ENCODE measurements at regions of chr1 and their contacts with region 1.

Region 1: GRCh38 chr1:34597877-34598514 is 156.9 kb upstream of the GJB5 start:
- DNase-seq: peak; percentile 82
- H3K4me3 ChIP-seq: no peak overlapping the region
- H3K27ac ChIP-seq: no peak overlapping the region
- H3K4me1 ChIP-seq: no peaks in the 10 kb centered on the region
- H3K27me3 ChIP-seq: peaks cover 0 to 41% (median 0%) of the 10 kb centered on the region in 7 donors
- CTCF ChIP-seq: peak; percentile 25 to 71 (median 67)
- POLR2A ChIP-seq: no peak

Region 2: DNA sequence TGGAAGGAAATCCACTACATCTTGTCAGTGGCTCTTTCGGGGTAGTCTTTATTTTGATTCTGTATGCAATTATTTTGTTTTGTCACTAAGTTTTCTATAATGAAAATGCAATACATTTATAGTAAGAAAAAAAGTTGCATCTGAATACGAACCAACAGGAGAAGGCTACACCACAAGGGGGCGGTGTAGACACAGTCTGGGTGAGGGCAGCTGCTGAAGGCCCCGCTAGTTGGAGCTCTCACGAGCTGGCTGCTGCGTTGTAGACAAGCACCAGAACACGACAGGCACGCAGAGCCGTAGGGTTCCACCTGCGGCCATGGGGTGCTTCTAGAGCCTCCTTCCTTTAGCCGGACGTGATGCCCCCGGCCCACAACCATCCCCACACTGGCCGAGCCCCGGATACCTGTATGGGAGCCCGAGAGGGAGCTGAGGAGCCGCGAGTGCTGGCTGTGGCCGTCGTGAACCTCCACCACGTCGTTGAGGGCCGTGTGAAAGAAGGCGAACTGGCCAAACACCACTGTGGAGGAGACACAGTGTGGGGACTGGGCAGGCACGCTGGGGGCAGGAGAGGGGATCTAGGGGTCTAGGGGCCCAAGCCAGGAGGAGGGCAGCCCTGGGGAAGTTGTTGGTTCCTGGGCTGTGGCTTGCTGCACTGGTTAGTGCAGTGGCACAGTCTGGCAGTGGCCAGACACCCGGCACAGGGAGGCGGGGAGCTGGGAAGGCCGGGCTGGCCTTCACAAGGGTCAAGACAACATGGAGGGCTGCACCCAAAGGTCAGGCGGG is 964.8 kb before region 1 on chr1:
- intact Hi-C with region 1: loop called (anchors 10 kb)
- DNase-seq: peak; percentile 92
- H3K4me3 ChIP-seq: no peak overlapping the region
- H3K27ac ChIP-seq: no peak overlapping the region
- H3K4me1 ChIP-seq: peaks cover 0 to 6% (median 5%) of the 10 kb centered on the region in 6 donors
- H3K27me3 ChIP-seq: peaks cover 0 to 55% (median 0%) of the 10 kb centered on the region in 7 donors
- CTCF ChIP-seq: peak in 10 of 11 experiments; percentile 26 to 92 (median 83)
- POLR2A ChIP-seq: no peak

Region 3: DNA sequence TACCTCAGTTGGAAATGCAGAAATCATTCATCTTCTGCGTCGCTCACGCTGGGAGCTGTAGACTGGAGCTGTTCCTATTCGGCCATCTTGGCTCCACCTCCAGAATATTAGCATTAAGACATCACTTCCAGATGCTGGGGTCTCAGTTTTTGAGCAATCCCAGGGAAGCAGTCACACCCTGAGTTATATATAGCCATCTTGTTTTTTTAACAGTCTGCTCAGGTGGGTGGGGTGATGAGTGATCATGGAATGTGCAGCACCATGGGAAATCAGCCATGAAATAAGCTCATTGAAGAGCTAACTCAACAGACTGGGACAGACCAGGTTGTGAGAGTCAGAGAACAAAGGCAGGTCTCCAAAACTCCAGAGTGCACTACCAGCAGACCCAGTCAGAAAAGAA is 761.1 kb before region 1 on chr1:
- intact Hi-C with region 1: no loop called
- DNase-seq: no peak
- H3K4me3 ChIP-seq: no peak overlapping the region
- H3K27ac ChIP-seq: no peak overlapping the region
- H3K4me1 ChIP-seq: no peaks in the 10 kb centered on the region
- H3K27me3 ChIP-seq: no peaks in the 10 kb centered on the region
- CTCF ChIP-seq: no peak
- POLR2A ChIP-seq: no peak

Region 4: DNA sequence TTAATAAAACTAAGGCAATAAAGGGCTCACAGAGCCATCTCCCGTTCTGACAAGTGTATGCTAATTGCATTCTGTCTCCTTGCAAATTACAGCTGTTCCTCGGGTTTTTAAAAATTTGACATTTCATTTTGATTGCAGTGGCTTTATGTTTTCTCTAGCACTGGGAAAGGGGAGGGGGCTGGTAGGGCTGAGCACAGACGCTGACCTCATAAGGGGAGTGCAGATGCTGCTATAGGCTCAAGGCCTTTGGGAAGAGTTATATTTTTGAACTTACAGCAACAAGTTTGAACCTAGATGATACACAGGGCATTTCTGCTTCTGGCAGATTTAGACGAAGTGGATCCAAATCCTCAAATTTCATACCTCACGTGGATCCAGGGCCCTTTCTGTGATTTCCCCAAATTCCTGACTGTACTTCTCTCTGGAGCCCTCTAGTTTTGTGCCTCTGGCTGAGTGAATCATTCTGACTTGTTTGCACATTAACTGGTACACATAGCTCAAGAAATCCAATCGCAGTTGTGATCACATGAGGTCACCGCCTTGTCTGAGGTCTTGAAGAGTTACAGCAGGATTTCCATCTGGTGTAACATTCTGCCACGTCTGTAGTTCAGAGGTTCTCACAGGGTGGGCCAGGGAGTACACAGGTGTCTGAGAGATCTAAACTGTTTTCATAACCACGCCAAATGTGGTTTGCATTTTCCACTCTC is 191.0 kb before region 1 on chr1:
- intact Hi-C with region 1: no loop called
- DNase-seq: no peak
- H3K4me3 ChIP-seq: no peak overlapping the region
- H3K27ac ChIP-seq: no peak overlapping the region
- H3K4me1 ChIP-seq: no peaks in the 10 kb centered on the region
- H3K27me3 ChIP-seq: peaks cover 0 to 5% (median 0%) of the 10 kb centered on the region in 7 donors
- CTCF ChIP-seq: no peak
- POLR2A ChIP-seq: no peak

Measured in spleen (tissue), 13 donors.